ENCODE measurements at regions of chrX and their contacts with region 1.

Region 1: GRCh38 chrX:149950681-149951080 is 12.4 kb upstream of the EOLA2 start:
- DNase-seq: peak in 3 of 9 donors; percentile 6 to 19 (median 9)
- ATAC-seq: no peak
- H3K4me3 ChIP-seq: no peak overlapping the region
- H3K4me3 Mint-ChIP-seq: no peak overlapping the region
- H3K27ac ChIP-seq: no peak overlapping the region
- H3K27ac Mint-ChIP-seq: peak overlapping the region in 1 of 9 donors; percentile 9
- H3K4me1 ChIP-seq: no peaks in the 10 kb centered on the region
- H3K4me1 Mint-ChIP-seq: peaks cover 0 to 7% (median 0%) of the 10 kb centered on the region in 7 donors
- H3K27me3 ChIP-seq: no peaks in the 10 kb centered on the region
- H3K27me3 Mint-ChIP-seq: no peaks in the 10 kb centered on the region

Region 2: GRCh38 chrX:149962859-149963757 is 12.4 kb after region 1 on chrX:
- CTCF ChIA-PET with region 1: no interaction called
- POLR2A ChIA-PET with region 1: no interaction called
- intact Hi-C with region 1: loop called in 1 of 2 experiments (anchors 1 kb)
- DNase-seq: peak in 3 of 9 donors; percentile 10 to 24 (median 11)
- ATAC-seq: peak; percentile 51
- H3K4me3 ChIP-seq: no peak overlapping the region
- H3K4me3 Mint-ChIP-seq: no peak overlapping the region
- H3K27ac ChIP-seq: no peak overlapping the region
- H3K27ac Mint-ChIP-seq: no peak overlapping the region
- H3K4me1 ChIP-seq: no peaks in the 10 kb centered on the region
- H3K4me1 Mint-ChIP-seq: peaks cover 0 to 4% (median 0%) of the 10 kb centered on the region in 7 donors
- H3K27me3 ChIP-seq: no peaks in the 10 kb centered on the region
- H3K27me3 Mint-ChIP-seq: no peaks in the 10 kb centered on the region

Region 3: DNA sequence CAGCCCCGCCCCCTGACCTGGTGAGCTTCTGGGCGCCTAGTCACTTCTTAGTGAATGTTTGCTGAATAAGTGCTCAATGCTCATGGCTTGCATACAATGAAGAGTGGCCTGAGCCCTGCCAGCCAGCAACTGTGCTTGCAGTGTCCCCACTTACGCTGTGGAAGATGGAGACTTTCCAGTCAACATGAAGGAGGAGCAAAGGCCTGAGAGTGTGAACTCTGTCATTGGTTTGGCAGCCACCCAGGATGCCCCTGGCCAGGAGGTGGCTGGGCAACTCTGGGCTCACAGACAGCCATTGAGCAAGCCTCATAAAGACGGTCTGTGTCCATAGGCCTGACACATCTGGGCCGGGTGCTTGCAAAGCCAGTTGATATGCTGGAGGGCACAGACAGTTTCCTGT is 340.3 kb after region 1 on chrX:
- CTCF ChIA-PET with region 1: no interaction called
- POLR2A ChIA-PET with region 1: no interaction called
- intact Hi-C with region 1: no loop called
- DNase-seq: no peak
- ATAC-seq: no peak
- H3K4me3 ChIP-seq: no peak overlapping the region
- H3K4me3 Mint-ChIP-seq: no peak overlapping the region
- H3K27ac ChIP-seq: no peak overlapping the region
- H3K27ac Mint-ChIP-seq: no peak overlapping the region
- H3K4me1 ChIP-seq: no peaks in the 10 kb centered on the region
- H3K4me1 Mint-ChIP-seq: no peaks in the 10 kb centered on the region
- H3K27me3 ChIP-seq: no peaks in the 10 kb centered on the region
- H3K27me3 Mint-ChIP-seq: peaks cover 0 to 8% (median 0%) of the 10 kb centered on the region in 5 donors

Region 4: GRCh38 chrX:150486011-150486410 is 535.3 kb after region 1 on chrX:
- CTCF ChIA-PET with region 1: no interaction called
- POLR2A ChIA-PET with region 1: no interaction called
- intact Hi-C with region 1: loop called in 1 of 2 experiments (anchors 5 kb)
- DNase-seq: peak in 8 of 9 donors; percentile 7 to 46 (median 34)
- ATAC-seq: peak; percentile 74
- H3K4me3 ChIP-seq: no peak overlapping the region
- H3K4me3 Mint-ChIP-seq: no peak overlapping the region
- H3K27ac ChIP-seq: no peak overlapping the region
- H3K27ac Mint-ChIP-seq: no peak overlapping the region
- H3K4me1 ChIP-seq: no peaks in the 10 kb centered on the region
- H3K4me1 Mint-ChIP-seq: peaks cover 0 to 48% (median 0%) of the 10 kb centered on the region in 7 donors
- H3K27me3 ChIP-seq: no peaks in the 10 kb centered on the region
- H3K27me3 Mint-ChIP-seq: no peaks in the 10 kb centered on the region

Region 5: DNA sequence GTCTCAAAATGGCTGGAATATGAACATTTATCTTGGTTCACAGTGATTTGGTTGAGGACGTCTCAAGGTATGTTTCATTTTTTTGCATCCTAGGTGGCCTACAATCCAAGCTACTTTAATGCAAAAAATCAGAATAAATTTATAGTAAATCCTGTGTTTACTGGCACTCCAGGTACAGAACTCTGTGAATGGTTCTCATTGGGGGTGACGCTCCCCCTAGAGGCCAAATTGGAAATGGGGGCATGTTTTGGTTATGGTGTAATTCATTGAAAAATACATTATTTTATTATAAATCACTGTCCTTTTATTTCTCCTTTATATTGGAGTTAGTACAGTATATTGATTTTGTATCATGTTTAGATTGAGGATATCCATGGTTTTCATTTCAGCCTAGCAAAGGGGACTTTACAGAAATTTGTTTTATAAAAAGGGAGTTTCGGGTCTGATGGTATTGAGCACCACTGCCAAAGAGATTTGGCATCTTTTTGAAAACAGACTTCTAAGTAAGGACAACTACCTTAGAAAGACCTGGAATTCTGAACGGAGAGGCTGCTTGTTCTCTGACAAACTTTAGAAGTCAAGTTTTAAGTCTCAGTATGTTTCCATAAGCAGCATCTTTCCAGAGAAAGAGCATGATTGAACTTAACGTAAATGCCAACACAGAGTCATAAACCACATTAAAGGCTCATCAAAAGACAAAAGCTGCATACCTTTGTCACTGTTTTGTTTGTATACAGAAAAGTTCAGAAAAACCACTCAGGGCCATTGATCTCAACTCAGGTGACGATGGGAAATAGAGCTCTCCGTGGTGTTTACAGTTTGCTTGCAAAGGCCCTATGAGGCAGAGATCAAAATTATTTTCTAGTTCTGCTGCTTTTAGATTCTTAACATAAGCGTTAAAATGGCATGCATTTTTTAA is 637.2 kb after region 1 on chrX:
- CTCF ChIA-PET with region 1: no interaction called
- POLR2A ChIA-PET with region 1: no interaction called
- intact Hi-C with region 1: loop called in 1 of 2 experiments (anchors 1 kb)
- DNase-seq: peak in 6 of 9 donors; percentile 16 to 53 (median 38)
- ATAC-seq: peak; percentile 55
- H3K4me3 ChIP-seq: no peak overlapping the region
- H3K4me3 Mint-ChIP-seq: no peak overlapping the region
- H3K27ac ChIP-seq: no peak overlapping the region
- H3K27ac Mint-ChIP-seq: no peak overlapping the region
- H3K4me1 ChIP-seq: no peaks in the 10 kb centered on the region
- H3K4me1 Mint-ChIP-seq: peaks cover 0 to 33% (median 25%) of the 10 kb centered on the region in 7 donors
- H3K27me3 ChIP-seq: no peaks in the 10 kb centered on the region
- H3K27me3 Mint-ChIP-seq: no peaks in the 10 kb centered on the region

Region 6: DNA sequence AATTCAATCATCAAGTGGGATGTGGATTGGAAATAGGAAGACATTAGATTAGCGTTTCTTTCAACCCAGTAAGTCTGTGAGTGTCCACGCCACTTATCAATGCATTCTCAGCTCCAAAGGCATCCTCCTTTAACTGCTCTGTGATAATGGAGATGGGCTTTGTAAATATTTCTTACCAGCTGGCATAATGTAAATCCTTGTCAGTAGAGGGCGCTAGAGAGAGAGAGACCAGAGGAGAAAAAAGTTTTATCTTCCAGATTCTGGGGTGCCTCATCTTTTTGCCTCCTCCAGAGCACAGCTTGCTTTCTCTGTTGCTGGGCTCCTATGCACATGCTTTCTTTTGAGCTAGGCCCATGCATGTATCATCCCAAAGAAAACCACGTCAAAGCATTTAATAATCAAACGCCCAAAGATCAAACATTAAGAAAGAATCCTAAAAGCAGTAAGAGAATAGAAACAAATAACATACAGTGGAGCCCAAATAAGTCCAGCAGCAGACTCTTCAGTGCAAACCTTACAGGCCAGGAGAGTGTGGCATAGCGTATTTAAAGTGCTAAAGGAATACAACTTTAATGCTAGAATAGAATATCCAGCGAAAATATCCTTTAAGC is 733.0 kb after region 1 on chrX:
- CTCF ChIA-PET with region 1: no interaction called
- POLR2A ChIA-PET with region 1: no interaction called
- intact Hi-C with region 1: loop called (anchors 2 kb)
- DNase-seq: peak in 7 of 9 donors; percentile 36 to 68 (median 60)
- ATAC-seq: peak; percentile 72
- H3K4me3 ChIP-seq: no peak overlapping the region
- H3K4me3 Mint-ChIP-seq: no peak overlapping the region
- H3K27ac ChIP-seq: no peak overlapping the region
- H3K27ac Mint-ChIP-seq: peak overlapping the region in 2 of 9 donors; percentile 32 to 42
- H3K4me1 ChIP-seq: peaks cover 0 to 6% of the 10 kb centered on the region in 2 donors
- H3K4me1 Mint-ChIP-seq: peaks cover 8 to 32% (median 12%) of the 10 kb centered on the region in 7 donors
- H3K27me3 ChIP-seq: no peaks in the 10 kb centered on the region
- H3K27me3 Mint-ChIP-seq: no peaks in the 10 kb centered on the region

Region 7: DNA sequence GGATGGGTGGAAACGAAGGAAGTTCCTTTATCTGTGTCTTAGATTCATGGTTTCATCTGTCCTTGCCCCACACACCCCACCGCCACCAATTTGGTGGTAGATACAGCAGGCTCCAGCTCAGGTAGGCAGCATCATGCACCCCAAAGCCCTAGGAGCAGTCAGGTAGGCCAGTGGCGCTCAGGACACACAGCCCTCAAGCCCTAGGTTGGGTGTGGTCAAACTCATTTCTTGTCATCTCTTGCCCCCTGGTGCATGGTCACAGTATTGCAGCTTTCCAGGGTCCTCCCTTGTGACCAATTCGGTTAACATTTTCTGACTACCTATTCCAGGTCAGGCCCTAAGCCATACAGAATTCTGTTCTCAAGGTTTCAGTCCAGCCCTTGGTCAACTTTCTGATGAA is 1730.1 kb after region 1 on chrX:
- CTCF ChIA-PET with region 1: no interaction called
- POLR2A ChIA-PET with region 1: no interaction called
- intact Hi-C with region 1: loop called in 1 of 2 experiments (anchors 10 kb)
- DNase-seq: peak in 8 of 9 donors; percentile 9 to 47 (median 31)
- ATAC-seq: peak; percentile 32
- H3K4me3 ChIP-seq: no peak overlapping the region
- H3K4me3 Mint-ChIP-seq: no peak overlapping the region
- H3K27ac ChIP-seq: no peak overlapping the region
- H3K27ac Mint-ChIP-seq: no peak overlapping the region
- H3K4me1 ChIP-seq: no peaks in the 10 kb centered on the region
- H3K4me1 Mint-ChIP-seq: peaks cover 0 to 7% (median 0%) of the 10 kb centered on the region in 7 donors
- H3K27me3 ChIP-seq: no peaks in the 10 kb centered on the region
- H3K27me3 Mint-ChIP-seq: peaks cover 4 to 17% (median 13%) of the 10 kb centered on the region in 5 donors